CD14-positive monocyte (primary cell): ENCODE measurements at regions of chr1 and their contacts with region 1.

Region 1: DNA sequence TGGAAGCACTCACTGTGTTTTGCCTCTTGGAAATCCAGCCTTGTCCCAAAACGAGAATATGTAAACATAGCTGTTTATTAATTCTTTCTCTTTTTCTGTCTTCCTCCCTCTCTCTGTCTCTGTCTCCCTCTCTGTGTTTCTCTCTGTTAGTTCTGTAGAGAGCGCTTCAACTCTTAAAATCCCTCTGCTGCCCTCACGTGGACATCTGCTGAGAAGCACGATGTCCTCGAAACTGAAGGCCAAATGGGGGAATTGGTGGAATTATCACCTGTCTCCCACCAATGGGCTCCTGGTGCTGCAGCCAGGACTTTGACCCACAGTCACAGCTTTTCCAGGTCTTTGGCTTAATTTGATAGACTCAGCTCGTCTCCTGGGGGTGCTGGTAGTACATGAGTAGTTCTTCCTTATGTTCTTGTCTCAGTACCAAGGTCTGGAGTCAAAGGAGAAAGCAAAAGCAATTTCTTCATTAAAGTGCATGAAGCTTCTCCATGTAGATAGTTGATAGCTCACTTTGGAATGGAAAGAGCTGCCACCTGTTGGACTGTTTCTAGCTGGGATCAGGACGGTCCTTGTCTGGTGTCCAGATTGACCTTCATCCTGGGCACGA is 5.5 kb upstream of the GBP6 start:
- DNase-seq: peak; percentile 61 to 74 (median 71)
- H3K4me3 ChIP-seq: no peak overlapping the region
- H3K4me3 Mint-ChIP-seq: peak overlapping the region in 1 of 2 donors; percentile 1
- H3K27ac ChIP-seq: no peak overlapping the region
- H3K27ac Mint-ChIP-seq: peak overlapping the region in 1 of 7 donors; percentile 56
- H3K4me1 ChIP-seq: peaks cover 18 to 20% of the 10 kb centered on the region in 2 donors
- H3K4me1 Mint-ChIP-seq: peaks cover 32% of the 10 kb centered on the region
- H3K27me3 ChIP-seq: no peaks in the 10 kb centered on the region
- H3K27me3 Mint-ChIP-seq: no peaks in the 10 kb centered on the region
- CTCF ChIP-seq: peak; percentile 87

Region 2: GRCh38 chr1:88998716-88999115 is 359.7 kb before region 1 on chr1:
- intact Hi-C with region 1: loop called (anchors 2 to 5 kb)
- DNase-seq: peak; percentile 54 to 85 (median 62)
- H3K4me3 ChIP-seq: no peak overlapping the region
- H3K4me3 Mint-ChIP-seq: no peak overlapping the region
- H3K27ac ChIP-seq: no peak overlapping the region
- H3K27ac Mint-ChIP-seq: no peak overlapping the region
- H3K4me1 ChIP-seq: peaks cover 2% of the 10 kb centered on the region in 2 donors
- H3K4me1 Mint-ChIP-seq: peaks cover 1% of the 10 kb centered on the region
- H3K27me3 ChIP-seq: no peaks in the 10 kb centered on the region
- H3K27me3 Mint-ChIP-seq: no peaks in the 10 kb centered on the region
- CTCF ChIP-seq: peak; percentile 69

Region 3: GRCh38 chr1:89085781-89086180 is 272.6 kb before region 1 on chr1:
- intact Hi-C with region 1: loop called in 1 of 2 experiments (anchors 5 kb)
- DNase-seq: peak; percentile 53 to 69 (median 54)
- H3K4me3 ChIP-seq: no peak overlapping the region
- H3K4me3 Mint-ChIP-seq: no peak overlapping the region
- H3K27ac ChIP-seq: no peak overlapping the region
- H3K27ac Mint-ChIP-seq: no peak overlapping the region
- H3K4me1 ChIP-seq: peaks cover 6 to 10% of the 10 kb centered on the region in 2 donors
- H3K4me1 Mint-ChIP-seq: peaks cover 8% of the 10 kb centered on the region
- H3K27me3 ChIP-seq: no peaks in the 10 kb centered on the region
- H3K27me3 Mint-ChIP-seq: no peaks in the 10 kb centered on the region
- CTCF ChIP-seq: peak; percentile 74